ENCODE measurements at regions of chr2 and their contacts with region 1.

Region 1: GRCh38 chr2:117698287-117698686 is 116.2 kb upstream of the DDX18 start:
- DNase-seq: no peak
- H3K4me3 ChIP-seq: no peak overlapping the region
- H3K27ac ChIP-seq: no peak overlapping the region
- H3K4me1 ChIP-seq: no peaks in the 10 kb centered on the region
- H3K27me3 ChIP-seq: no peaks in the 10 kb centered on the region
- CTCF ChIP-seq: no peak

Region 2: DNA sequence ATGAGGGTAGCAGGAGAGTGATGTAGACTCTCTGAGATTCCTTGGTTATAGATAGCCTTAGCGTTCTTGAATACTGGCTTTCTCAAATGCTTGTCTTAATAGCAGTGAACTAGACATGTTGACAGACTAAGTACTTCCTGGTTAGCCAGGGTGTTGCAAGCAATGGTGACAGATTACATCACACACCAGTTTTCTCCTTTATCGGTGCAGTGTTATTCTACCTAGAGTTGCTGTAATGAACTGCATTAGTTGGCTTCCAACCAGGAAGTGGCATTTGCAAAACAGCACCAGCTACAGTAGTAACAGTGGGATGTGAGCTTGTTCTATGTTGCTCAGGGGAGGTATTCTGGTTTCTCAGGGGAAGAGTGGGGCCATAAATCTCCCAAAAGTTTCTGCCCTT is 466.0 kb before region 1 on chr2:
- intact Hi-C with region 1: loop called (anchors 5 kb)
- DNase-seq: no peak
- H3K4me3 ChIP-seq: no peak overlapping the region
- H3K27ac ChIP-seq: no peak overlapping the region
- H3K4me1 ChIP-seq: no peaks in the 10 kb centered on the region
- H3K27me3 ChIP-seq: no peaks in the 10 kb centered on the region
- CTCF ChIP-seq: no peak

Region 3: GRCh38 chr2:117856415-117857210 is 158.3 kb after region 1 on chr2:
- intact Hi-C with region 1: no loop called
- DNase-seq: no peak
- H3K4me3 ChIP-seq: no peak overlapping the region
- H3K27ac ChIP-seq: no peak overlapping the region
- H3K4me1 ChIP-seq: no peaks in the 10 kb centered on the region
- H3K27me3 ChIP-seq: peaks cover 0 to 34% of the 10 kb centered on the region in 2 donors
- CTCF ChIP-seq: no peak